Posterior vena cava (tissue), 2 donors: ENCODE measurements at regions of chr5 and their contacts with region 1.

Region 1: DNA sequence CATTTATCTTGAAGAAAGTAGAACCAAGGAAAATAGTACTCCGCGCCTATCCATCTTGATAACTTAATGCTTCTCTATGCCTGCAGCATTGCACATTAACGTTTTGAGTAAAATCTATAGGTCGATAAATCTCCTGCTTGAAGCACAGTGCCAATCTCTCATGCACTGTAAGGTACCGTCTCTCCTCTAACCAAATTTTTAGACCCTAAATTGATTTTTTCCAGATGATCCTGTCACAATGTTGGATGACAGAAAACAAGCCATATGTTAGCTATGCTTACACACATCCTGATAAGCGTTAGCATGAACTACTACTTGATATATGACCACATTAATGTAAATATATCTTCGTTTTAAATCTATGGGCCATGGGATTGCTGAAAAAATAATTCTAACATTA is 723.8 kb upstream of the CDH6 start:
- DNase-seq: no peak

Region 2: GRCh38 chr5:30505014-30505886 is 35.6 kb after region 1 on chr5:
- intact Hi-C with region 1: loop called in 1 of 2 experiments (anchors 2 kb)
- DNase-seq: no peak

Region 3: DNA sequence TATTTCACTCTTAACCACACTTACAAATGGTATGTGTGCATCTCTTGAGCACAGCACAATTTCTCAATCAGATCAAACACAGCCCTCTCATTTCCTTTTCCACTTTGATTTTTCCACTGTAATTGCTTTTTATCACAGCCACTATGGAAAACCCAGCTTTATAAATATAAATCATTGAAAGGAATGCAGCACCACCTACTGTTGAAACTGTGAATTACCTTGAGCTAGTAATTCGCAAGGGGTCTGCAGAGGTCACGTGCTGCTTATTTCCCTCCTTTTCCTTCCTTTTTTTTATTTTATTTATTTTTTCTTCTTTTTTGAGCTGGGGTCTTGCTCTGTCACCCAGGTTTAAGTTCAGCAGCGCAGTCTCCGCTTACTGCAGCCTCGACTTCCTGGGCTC is 800.7 kb after region 1 on chr5:
- intact Hi-C with region 1: no loop called
- DNase-seq: no peak